Activated naive CD4-positive, alpha-beta T cell treated with anti-CD3 and anti-CD28 coated beads for 36 hours (primary cell): ENCODE measurements at regions of chr19 and their contacts with region 1.

Region 1: GRCh38 chr19:17496337-17496997 is 15.0 kb upstream of the PGLS start:
- DNase-seq: peak; percentile 89
- H3K4me3 Mint-ChIP-seq: no peak overlapping the region
- H3K27ac Mint-ChIP-seq: no peak overlapping the region
- H3K4me1 Mint-ChIP-seq: peaks cover 15% of the 10 kb centered on the region
- H3K27me3 Mint-ChIP-seq: no peaks in the 10 kb centered on the region

Region 2: GRCh38 chr19:17370026-17370587 is 126.4 kb before region 1 on chr19:
- CTCF ChIA-PET with region 1: no interaction called
- intact Hi-C with region 1: no loop called
- DNase-seq: no peak
- H3K4me3 Mint-ChIP-seq: no peak overlapping the region
- H3K27ac Mint-ChIP-seq: no peak overlapping the region
- H3K4me1 Mint-ChIP-seq: peaks cover 6% of the 10 kb centered on the region
- H3K27me3 Mint-ChIP-seq: peaks cover 7% of the 10 kb centered on the region

Region 3: GRCh38 chr19:17419621-17420466 is 76.6 kb before region 1 on chr19 and contains the start of gene MVB12A:
- CTCF ChIA-PET with region 1: no interaction called
- intact Hi-C with region 1: no loop called
- DNase-seq: peak; percentile 98
- H3K4me3 Mint-ChIP-seq: peak within 1 kb of the TSS; percentile 87
- H3K27ac Mint-ChIP-seq: peak within 1 kb of the TSS; percentile 87
- H3K4me1 Mint-ChIP-seq: peaks cover 16% of the 10 kb centered on the region
- H3K27me3 Mint-ChIP-seq: no peaks in the 10 kb centered on the region
- total RNA-seq, gene MVB12A: 29.3 to 32.1 TPM

Region 4: DNA sequence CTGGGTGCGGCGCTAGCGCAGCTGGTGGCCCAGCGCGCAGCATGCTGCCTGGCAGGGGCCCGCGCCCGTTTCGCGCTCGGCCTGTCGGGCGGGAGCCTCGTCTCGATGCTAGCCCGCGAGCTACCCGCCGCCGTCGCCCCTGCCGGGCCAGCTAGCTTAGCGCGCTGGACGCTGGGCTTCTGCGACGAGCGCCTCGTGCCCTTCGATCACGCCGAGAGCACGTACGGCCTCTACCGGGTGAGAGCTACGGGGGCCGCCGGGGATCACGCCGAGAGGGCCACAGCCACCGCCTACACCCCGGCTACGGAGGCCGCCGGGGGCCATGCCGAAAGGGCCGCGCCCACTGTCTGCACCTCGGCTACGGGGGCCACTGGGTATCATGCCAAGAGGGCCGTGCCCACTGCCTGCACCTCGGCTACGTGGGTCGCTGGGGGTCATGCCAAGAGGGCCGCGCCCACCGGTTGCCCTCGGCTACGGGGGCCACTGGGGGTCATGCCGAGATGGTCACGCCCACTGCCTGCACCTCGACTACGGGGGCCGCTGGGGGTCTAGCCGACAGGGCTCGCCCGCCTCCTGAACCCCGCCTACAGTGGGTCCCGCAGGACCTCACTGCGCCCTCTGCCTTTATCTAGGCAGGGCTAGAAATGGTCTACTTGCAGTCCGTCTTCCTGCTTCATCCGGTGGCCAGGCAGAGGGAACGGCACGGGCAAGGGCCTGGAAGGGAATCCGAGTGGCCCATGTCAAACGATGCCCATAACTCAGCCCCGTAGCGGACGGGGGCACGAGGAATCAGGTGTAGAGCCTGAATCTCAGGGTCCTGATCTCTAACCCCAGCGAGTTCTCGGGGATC is 15.5 kb after region 1 on chr19:
- CTCF ChIA-PET with region 1: interaction called, 21 read pairs
- intact Hi-C with region 1: no loop called
- DNase-seq: peak; percentile 85
- H3K4me3 Mint-ChIP-seq: peak overlapping the region; percentile 93
- H3K27ac Mint-ChIP-seq: peak overlapping the region; percentile 73
- H3K4me1 Mint-ChIP-seq: peaks cover 37% of the 10 kb centered on the region
- H3K27me3 Mint-ChIP-seq: no peaks in the 10 kb centered on the region

Region 5: DNA sequence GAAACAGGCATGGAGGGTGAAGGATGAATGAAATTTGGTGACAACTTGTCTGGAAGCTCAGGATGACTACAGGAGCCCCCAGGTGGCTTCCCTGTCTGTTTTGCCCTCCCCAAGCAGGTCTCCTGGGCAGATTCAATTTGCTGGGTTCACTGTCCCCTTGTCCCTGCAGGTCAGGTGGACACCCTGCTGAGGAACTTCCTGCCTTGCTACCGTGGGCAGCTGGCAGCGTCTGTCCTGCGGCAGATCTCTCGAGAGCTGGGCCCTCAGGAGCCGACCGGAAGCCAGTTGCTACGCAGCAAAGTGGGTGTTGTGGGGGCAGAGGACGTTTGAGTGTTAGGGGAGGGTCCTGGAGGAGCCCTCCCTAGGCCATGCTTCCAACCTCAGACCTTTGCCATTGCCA is 34.1 kb after region 1 on chr19:
- CTCF ChIA-PET with region 1: interaction called, 12 read pairs
- intact Hi-C with region 1: no loop called
- DNase-seq: no peak
- H3K4me3 Mint-ChIP-seq: no peak overlapping the region
- H3K27ac Mint-ChIP-seq: no peak overlapping the region
- H3K4me1 Mint-ChIP-seq: no peaks in the 10 kb centered on the region
- H3K27me3 Mint-ChIP-seq: no peaks in the 10 kb centered on the region

Region 6: DNA sequence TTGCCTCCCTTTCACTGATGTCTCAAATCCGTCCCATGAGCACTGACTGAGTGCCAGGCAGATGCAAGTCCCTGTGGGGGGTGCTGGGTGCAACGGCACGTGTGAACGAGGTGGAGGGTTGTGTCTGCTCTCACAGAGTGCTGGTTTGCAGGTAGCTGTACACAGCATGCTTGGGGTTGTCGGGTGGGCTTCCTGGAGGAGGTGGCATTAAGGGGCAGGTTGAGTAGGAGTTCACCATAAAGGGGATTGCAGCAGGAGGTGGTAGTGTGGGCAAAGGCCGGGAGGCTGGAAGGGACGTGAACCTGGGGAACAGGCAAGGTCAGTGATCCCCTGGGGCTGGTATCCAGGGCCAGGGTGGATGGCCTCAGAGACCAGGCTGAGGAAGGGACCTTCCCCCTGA is 76.2 kb after region 1 on chr19:
- CTCF ChIA-PET with region 1: interaction called, 15 read pairs
- intact Hi-C with region 1: loop called (anchors 1 kb)
- DNase-seq: no peak
- H3K4me3 Mint-ChIP-seq: no peak overlapping the region
- H3K27ac Mint-ChIP-seq: no peak overlapping the region
- H3K4me1 Mint-ChIP-seq: no peaks in the 10 kb centered on the region
- H3K27me3 Mint-ChIP-seq: no peaks in the 10 kb centered on the region

Region 7: DNA sequence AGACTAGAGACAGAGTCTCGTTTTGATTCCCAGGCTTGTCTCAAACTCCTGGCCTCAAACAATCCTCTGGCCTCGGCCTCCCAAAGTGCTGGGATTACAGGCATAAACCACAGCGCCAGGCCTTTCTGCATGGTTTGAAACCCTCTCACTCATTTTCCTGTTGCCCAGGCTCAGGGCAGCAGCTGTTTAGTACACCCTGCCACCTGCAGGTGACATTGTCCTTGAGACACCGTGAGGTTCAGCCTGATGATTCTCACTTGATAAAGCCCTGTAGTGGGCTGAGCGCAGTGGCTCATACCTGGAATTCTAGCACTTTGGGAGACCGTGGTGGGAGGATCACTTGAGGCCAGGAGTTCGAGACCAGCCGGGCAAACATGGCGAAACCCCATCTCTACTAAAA is 577.7 kb after region 1 on chr19:
- CTCF ChIA-PET with region 1: no interaction called
- intact Hi-C with region 1: no loop called
- DNase-seq: no peak
- H3K4me3 Mint-ChIP-seq: no peak overlapping the region
- H3K27ac Mint-ChIP-seq: no peak overlapping the region
- H3K4me1 Mint-ChIP-seq: peaks cover 8% of the 10 kb centered on the region
- H3K27me3 Mint-ChIP-seq: no peaks in the 10 kb centered on the region